Calu3 (cell line): ENCODE measurements at regions of chr11 and their contacts with region 1.

Region 1: DNA sequence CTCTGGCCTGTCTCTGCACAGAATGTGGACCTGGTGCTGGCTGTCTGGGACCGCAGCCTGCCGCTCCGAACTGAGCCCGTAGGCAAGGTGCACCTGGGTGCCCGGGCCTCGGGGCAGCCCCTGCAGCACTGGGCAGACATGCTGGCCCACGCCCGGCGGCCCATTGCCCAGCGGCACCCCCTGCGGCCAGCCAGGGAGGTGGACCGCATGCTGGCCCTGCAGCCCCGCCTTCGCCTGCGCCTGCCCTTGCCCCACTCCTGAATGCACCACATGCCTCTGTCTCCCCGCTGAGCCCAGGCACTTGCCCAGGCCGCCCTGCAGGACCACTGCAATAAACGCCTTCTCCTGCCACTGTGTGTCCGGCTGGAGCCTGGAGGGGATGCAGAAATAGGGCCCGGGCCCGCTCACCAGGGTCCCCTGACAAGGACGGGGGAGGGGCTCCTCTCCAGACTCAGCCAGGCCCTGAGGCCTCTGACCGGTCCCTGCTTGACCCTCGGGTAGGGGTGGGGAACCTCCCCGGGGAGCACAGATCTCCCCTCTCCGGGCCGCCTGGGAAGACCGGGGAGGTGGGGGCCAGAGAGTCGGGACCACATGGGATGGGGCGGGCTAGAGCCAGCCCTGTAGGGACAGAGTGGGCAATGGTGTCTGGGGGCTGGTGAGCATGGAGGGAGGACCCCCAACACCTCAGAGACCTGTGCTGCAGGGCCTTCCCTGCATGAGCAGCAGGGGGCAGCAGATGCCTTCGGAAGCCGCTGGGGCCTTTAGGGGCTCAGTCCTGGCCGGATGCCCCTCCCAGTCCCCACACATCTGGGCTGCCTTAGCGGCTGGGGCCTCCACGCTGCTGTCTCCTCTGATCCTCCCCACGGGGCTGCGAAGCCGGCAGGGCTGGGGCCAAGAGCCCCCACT is 1.4 kb upstream of the TNNI2 start:
- DNase-seq: peak; percentile 76
- H3K4me3 Mint-ChIP-seq: no peak overlapping the region
- H3K27ac Mint-ChIP-seq: no peak overlapping the region
- H3K4me1 Mint-ChIP-seq: peaks cover 19% of the 10 kb centered on the region
- H3K27me3 Mint-ChIP-seq: no peaks in the 10 kb centered on the region
- CTCF ChIP-seq: peak; percentile 89

Region 2: GRCh38 chr11:1873048-1873812 is 35.8 kb after region 1 on chr11:
- CTCF ChIA-PET with region 1: interaction called, 3 read pairs
- intact Hi-C with region 1: loop called (anchors 5 kb)
- DNase-seq: no peak
- H3K4me3 Mint-ChIP-seq: no peak overlapping the region
- H3K27ac Mint-ChIP-seq: no peak overlapping the region
- H3K4me1 Mint-ChIP-seq: no peaks in the 10 kb centered on the region
- H3K27me3 Mint-ChIP-seq: peaks cover 59% of the 10 kb centered on the region
- CTCF ChIP-seq: no peak